ENCODE measurements at regions of chr7 and their contacts with region 1.

Region 1: DNA sequence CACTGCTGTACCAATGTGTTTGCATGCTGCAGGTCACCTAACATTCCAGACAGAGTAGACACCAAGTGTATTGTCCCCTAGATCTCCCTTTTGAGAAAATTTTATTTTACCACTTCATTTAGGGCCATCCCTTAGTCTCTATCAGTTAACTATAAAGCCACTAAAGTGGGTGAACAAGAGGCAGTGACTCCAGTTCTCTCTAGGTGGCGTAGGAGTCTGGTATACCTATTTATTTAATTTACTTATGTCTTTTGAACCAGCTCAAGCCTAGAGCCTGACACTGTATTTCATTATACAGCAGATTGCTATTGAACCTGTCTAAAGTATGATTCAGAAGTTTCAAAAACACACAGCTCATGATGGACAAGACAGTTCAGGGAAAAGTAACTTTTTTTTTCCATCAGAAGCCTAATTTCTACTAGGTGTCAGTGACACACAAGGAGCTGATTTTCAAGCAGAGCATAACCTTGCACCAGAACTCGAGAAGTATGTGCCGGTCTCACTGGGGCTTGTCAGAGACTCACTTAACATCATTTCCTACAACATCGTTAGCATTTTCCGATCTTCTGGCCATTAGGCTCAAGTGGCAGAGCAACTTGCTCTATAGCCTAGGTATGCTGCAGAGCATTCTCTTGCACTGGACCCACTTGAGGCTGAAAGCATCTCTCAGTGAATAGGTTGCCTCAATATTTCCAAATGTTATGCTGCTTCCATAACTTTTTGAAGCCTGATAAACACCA is 175.4 kb downstream of the CDC14C start:
- DNase-seq: peak; percentile 29
- ATAC-seq: 0 out of 2 replicates have a peak, but pooled peaks have one; percentile 38
- H3K4me3 ChIP-seq: no peak overlapping the region
- H3K27ac ChIP-seq: no peak overlapping the region
- H3K4me1 ChIP-seq: no peaks in the 10 kb centered on the region
- H3K27me3 ChIP-seq: peaks cover 5% of the 10 kb centered on the region; the same call in 1 of the 2 replicates
- CTCF ChIP-seq: peak; percentile 53

Region 2: DNA sequence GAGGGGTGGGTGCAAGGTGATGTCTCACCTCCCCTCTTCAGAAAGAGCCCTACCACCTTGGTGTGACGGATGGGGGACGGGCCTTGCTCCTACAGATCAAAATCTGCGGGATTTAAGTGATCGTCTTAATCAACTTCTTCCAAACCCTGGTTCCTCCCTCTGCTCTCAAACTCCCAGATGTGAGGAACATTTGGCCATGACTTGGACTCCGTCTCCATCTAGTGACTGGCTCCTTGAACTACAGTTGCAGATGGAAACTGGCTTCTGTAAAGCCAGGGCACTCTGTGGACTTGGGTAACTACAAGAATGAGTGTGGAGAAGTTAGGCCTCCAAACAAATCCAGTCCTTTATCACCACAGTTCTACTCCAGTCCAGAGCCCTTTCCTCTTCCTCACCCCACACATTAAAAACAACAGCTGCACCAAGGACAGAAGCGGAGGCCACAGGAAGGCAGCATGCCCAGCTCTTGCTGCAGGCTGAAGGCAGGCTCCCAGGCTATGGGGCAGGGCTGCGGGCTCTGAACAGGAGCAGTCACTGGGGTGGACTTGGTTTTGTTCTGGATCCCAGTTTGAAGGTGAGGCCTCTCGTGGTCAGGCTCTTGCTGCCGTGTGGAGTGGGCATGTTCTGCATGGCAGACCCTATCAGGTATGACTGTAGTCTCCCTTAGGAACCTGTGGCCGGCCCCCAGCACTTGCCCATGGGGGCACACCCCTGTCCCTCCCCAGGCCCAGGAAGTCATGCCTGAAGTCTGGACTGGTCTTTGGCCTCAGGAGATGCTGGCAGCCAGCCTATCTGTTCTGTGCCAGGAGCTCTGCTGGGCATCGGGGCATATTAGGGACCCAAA is 753.1 kb after region 1 on chr7:
- CTCF ChIA-PET with region 1: no interaction called
- POLR2A ChIA-PET with region 1: no interaction called
- intact Hi-C with region 1: loop called (anchors 10 kb)
- DNase-seq: peak; percentile 74
- ATAC-seq: peak; percentile 80
- H3K4me3 ChIP-seq: no peak overlapping the region
- H3K27ac ChIP-seq: no peak overlapping the region
- H3K4me1 ChIP-seq: no peaks in the 10 kb centered on the region
- H3K27me3 ChIP-seq: peaks cover 16% of the 10 kb centered on the region
- CTCF ChIP-seq: peak; percentile 85